HepG2 (cell line): ENCODE measurements at regions of chr3 and their contacts with region 1.

Region 1: DNA sequence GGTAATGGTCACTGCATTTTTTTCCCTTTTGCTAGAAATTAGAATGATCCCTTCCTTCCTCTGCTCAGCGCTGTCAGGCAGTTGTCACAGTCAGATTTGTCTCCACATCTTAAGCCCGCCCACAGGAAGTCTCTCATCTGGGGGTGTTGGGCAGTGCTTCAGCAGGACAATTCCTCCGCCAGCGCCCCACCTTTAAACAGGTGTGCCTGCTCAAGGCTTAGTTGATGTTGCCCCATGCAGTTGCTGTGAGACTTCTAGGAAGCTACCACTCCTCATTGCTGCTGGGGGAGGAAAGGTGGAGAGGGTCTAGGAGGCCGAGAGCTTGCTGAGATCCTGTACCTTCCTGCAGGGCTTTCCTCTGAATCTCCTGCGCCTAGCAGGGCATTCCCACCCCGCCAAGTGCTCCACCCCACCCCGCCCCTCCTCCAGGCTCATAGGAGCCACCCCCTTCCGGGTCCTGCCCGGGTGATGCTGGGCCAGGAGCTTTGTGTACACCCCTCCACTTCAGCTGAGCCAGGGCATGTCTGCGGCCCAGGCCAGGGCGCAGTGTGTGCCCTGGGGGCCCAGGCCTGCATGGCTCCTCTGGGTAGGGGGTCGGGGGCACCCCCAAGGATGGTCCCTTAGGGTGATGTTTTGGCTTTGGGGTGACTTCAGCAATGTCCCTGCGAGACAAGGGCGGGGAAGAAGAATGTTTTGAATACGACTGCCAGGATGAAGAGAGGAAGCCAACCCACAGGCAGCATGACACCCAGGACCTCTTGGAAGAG is 68.7 kb downstream of the TRAK1 start:
- DNase-seq: peak; percentile 77
- ATAC-seq: peak; percentile 98
- H3K4me3 ChIP-seq: peak overlapping the region; percentile 57 to 81 (median 65)
- H3K27ac ChIP-seq: peak overlapping the region; percentile 70
- H3K4me1 ChIP-seq: peaks cover 55% of the 10 kb centered on the region
- H3K27me3 ChIP-seq: no peaks in the 10 kb centered on the region; a peak in 1 of 5 replicates
- CTCF ChIP-seq: no peak
- EP300 ChIP-seq: no peak
- POLR2A ChIP-seq: peak; percentile 33 to 64; a peak in 3 of 4 replicates
- RAD21 ChIP-seq: no peak

Region 2: DNA sequence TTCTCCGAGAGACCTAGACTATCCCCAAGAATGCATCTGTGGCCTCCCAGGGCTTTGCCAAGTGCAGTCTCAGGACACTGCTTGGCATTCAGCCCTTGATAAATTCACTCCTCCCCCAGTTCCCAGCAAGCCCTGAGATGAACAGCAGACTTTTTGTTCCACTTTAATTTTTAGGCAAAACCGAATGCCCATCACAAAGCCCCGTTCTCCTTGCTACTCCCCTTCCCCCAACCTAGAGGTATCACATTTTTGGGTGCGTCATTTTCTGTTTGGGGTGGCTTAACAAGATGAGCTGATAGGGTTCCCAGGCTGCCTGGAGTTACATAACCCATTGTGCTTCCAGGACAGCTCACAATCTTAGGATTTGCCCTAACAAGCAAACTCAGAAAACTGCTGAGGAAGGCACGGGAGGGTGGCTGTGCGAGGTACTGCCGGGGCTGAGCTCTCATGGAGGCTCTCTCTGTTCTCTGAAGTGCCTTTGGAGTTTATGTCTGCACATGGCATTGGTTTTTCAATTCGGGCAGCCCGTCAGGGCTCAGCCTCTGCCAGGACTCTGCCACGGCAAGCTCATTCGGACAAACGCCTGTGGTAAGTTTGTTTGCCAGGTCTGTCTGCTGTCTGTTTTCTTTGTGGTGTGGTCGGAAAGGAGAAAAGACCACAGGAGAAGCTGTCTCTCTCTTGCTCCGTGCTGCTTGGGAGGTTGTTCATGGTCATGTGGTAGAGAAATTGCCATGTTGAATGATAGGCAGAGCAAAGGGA is 68.7 kb before region 1 on chr3 and contains the start of gene TRAK1:
- CTCF ChIA-PET with region 1: no interaction called
- POLR2A ChIA-PET with region 1: no interaction called
- in situ Hi-C with region 1: no loop called
- intact Hi-C with region 1: no loop called
- DNase-seq: no peak
- ATAC-seq: no peak
- H3K4me3 ChIP-seq: no peak within 1 kb of the TSS
- H3K27ac ChIP-seq: no peak within 1 kb of the TSS
- H3K4me1 ChIP-seq: no peaks in the 10 kb centered on the region
- H3K27me3 ChIP-seq: no peaks in the 10 kb centered on the region
- CTCF ChIP-seq: no peak
- EP300 ChIP-seq: no peak
- POLR2A ChIP-seq: no peak
- RAD21 ChIP-seq: no peak
- total RNA-seq, gene TRAK1: 20.5 and 22.8 TPM in 2 replicates

Region 3: GRCh38 chr3:42106646-42107045 is 53.2 kb before region 1 on chr3:
- CTCF ChIA-PET with region 1: no interaction called
- POLR2A ChIA-PET with region 1: no interaction called
- in situ Hi-C with region 1: no loop called
- intact Hi-C with region 1: no loop called
- DNase-seq: no peak
- ATAC-seq: no peak
- H3K4me3 ChIP-seq: no peak overlapping the region
- H3K27ac ChIP-seq: no peak overlapping the region
- H3K4me1 ChIP-seq: peaks cover 18% of the 10 kb centered on the region
- H3K27me3 ChIP-seq: no peaks in the 10 kb centered on the region
- CTCF ChIP-seq: no peak
- EP300 ChIP-seq: no peak
- POLR2A ChIP-seq: no peak
- RAD21 ChIP-seq: no peak

Region 4: GRCh38 chr3:42134877-42135464 is 24.9 kb before region 1 on chr3:
- CTCF ChIA-PET with region 1: no interaction called
- POLR2A ChIA-PET with region 1: interaction called, 80 read pairs
- in situ Hi-C with region 1: no loop called
- intact Hi-C with region 1: no loop called
- DNase-seq: peak; percentile 34
- ATAC-seq: 0 out of 3 replicates have a peak, but pooled peaks have one; percentile 17
- H3K4me3 ChIP-seq: no peak overlapping the region
- H3K27ac ChIP-seq: peak overlapping the region; percentile 46
- H3K4me1 ChIP-seq: peaks cover 61% of the 10 kb centered on the region
- H3K27me3 ChIP-seq: no peaks in the 10 kb centered on the region
- CTCF ChIP-seq: peak; percentile 62
- EP300 ChIP-seq: peak in 1 of 2 experiments; percentile 30; a peak in 1 of 4 replicates
- POLR2A ChIP-seq: no peak
- RAD21 ChIP-seq: no peak

Region 5: DNA sequence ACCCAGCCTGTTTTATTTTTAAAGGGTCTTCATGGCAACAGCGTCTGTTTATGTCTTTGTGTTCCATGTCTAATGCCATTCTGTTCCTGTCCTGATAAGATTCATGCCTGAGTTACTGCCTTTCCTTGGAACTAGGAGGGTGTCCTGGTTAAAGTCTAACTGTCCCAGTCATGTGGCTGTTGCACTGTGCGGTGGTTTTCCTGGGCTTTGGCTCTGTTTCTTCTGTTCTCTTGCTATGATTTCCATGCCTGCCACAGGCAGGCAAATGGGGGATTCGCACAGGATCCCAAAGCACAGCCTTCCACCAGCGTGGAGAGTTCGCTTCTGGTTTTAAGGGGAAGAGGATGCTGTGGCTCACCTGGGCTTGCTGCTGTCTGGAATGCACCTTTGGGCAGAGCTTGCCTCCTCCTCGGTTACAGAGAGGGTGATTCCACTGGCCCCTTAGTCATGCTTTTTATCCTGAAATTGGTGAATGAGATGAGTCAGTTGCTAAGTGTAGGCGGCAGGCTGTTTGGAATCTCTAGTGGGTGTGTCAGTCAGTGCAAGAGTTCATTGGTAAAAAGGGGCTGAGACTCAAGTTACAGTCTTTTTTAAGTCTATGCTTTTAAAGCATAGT is 19.3 kb after region 1 on chr3:
- CTCF ChIA-PET with region 1: no interaction called
- POLR2A ChIA-PET with region 1: interaction called, 15 read pairs
- in situ Hi-C with region 1: no loop called
- intact Hi-C with region 1: loop called (anchors 2 kb)
- DNase-seq: peak; percentile 83
- ATAC-seq: peak; percentile 92
- H3K4me3 ChIP-seq: peak overlapping the region in 1 of 3 experiments; percentile 29; a peak in 2 of 6 replicates
- H3K27ac ChIP-seq: peak overlapping the region; percentile 83
- H3K4me1 ChIP-seq: peaks cover 65% of the 10 kb centered on the region
- H3K27me3 ChIP-seq: no peaks in the 10 kb centered on the region
- CTCF ChIP-seq: no peak
- EP300 ChIP-seq: peak in 1 of 2 experiments; percentile 3; a peak in 1 of 4 replicates
- POLR2A ChIP-seq: no peak
- RAD21 ChIP-seq: 0 out of 2 replicates have a peak, but pooled peaks have one; percentile 13